ENCODE measurements at regions of chr16 and their contacts with region 1.

Region 1: DNA sequence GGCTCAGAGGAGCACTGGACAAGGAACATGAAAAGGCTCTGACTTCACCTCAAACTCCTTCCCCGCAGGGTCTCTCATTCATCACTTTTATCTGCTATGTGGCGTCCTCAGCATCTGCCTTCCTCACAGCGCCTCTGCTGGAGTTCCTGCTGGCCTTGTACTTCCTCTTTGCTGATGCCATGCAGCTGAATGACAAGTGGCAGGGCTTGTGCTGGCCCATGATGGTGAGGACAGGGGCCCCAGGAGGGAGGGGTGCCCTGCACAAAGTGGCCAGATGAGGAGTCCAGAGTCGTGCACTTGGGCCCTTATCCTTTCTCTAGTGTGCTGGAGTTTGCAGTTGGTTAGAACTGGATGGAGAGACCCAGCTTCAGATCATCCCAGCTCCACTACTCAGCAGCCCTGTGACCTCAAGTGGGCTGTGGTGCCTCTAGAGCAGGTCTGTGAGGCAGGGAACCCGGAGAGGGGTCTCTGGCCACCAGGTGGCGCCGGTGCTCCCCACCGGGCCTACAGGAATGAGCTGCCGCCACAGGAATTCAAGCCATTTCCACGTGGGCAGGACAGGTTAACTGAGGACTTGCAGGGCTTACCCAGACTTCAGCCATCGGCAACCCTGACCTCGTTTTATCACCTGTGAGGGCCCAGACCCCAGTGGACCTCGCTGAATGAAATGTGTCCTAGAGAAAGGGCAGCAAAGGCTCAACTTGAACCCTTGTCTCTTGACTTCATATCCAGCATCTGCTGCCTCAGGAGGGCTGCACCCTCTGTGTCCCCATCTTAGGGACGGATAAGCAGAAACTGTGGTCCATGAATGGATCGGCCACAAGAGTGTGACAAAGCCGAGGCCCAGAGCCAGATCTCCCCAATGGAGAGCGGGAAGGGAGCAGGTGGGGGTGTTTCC is 4.0 kb downstream of the CMTM3 start:
- DNase-seq: peak; percentile 68 to 94 (median 87)

Region 2: GRCh38 chr16:66406534-66407221 is 201.8 kb before region 1 on chr16:
- intact Hi-C with region 1: loop called (anchors 5 kb)
- DNase-seq: peak; percentile 78 to 97 (median 90)

Region 3: GRCh38 chr16:66717112-66717675 is 108.7 kb after region 1 on chr16:
- intact Hi-C with region 1: loop called (anchors 10 kb)
- DNase-seq: peak in 39 of 42 donors; percentile 24 to 83 (median 58)

Region 4: GRCh38 chr16:66859397-66860068 is 251.0 kb after region 1 on chr16:
- intact Hi-C with region 1: loop called (anchors 10 kb)
- DNase-seq: no peak